Mammary epithelial cell (primary cell): ENCODE measurements at regions of chr4 and their contacts with region 1.

Region 1: DNA sequence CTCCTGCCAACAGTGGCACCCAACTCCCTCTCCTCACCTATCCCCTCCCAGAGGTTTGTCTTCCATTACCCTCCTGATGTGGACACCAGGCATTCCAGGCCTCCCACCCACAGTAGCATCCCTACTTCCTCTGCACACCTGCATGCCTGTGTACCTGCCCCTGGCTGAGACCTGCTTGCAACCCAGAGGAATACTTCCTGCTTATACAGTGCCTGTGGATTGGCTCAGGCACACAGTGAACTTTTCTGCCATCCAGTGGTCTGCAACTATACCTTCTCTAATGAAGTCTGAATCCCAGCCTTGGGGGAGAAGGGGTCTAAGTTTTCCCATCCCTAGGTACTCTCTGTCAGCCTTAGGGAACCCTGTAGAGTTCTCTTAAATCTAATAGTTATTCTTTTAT is 169.9 kb downstream of the IQCM start:
- DNase-seq: no peak
- H3K4me3 ChIP-seq: no peak overlapping the region
- H3K27ac ChIP-seq: no peak overlapping the region
- H3K4me1 ChIP-seq: no peaks in the 10 kb centered on the region
- H3K27me3 ChIP-seq: no peaks in the 10 kb centered on the region
- CTCF ChIP-seq: peak in 1 of 2 donors; percentile 29

Region 2: GRCh38 chr4:149897783-149898182 is 252.0 kb after region 1 on chr4:
- CTCF ChIA-PET with region 1: no interaction called
- dilution Hi-C with region 1: no loop called
- in situ Hi-C with region 1: no loop called
- intact Hi-C with region 1: loop called (anchors 10 kb)
- DNase-seq: peak; percentile 6
- H3K4me3 ChIP-seq: no peak overlapping the region
- H3K27ac ChIP-seq: no peak overlapping the region
- H3K4me1 ChIP-seq: no peaks in the 10 kb centered on the region
- H3K27me3 ChIP-seq: peaks cover 2% of the 10 kb centered on the region
- CTCF ChIP-seq: peak in 1 of 2 donors; percentile 49